GM10248 (cell line): ENCODE measurements at regions of chr17 and their contacts with region 1.

Region 1: GRCh38 chr17:64420143-64420971 is 28.6 kb upstream of the MILR1 start:
- DNase-seq: peak; percentile 66
- CTCF ChIP-seq: peak; percentile 80

Region 2: GRCh38 chr17:64306850-64307463 is 113.4 kb before region 1 on chr17:
- CTCF ChIA-PET with region 1: interaction called, 110 read pairs
- POLR2A ChIA-PET with region 1: no interaction called
- DNase-seq: peak; percentile 73
- CTCF ChIP-seq: peak; percentile 88

Region 3: DNA sequence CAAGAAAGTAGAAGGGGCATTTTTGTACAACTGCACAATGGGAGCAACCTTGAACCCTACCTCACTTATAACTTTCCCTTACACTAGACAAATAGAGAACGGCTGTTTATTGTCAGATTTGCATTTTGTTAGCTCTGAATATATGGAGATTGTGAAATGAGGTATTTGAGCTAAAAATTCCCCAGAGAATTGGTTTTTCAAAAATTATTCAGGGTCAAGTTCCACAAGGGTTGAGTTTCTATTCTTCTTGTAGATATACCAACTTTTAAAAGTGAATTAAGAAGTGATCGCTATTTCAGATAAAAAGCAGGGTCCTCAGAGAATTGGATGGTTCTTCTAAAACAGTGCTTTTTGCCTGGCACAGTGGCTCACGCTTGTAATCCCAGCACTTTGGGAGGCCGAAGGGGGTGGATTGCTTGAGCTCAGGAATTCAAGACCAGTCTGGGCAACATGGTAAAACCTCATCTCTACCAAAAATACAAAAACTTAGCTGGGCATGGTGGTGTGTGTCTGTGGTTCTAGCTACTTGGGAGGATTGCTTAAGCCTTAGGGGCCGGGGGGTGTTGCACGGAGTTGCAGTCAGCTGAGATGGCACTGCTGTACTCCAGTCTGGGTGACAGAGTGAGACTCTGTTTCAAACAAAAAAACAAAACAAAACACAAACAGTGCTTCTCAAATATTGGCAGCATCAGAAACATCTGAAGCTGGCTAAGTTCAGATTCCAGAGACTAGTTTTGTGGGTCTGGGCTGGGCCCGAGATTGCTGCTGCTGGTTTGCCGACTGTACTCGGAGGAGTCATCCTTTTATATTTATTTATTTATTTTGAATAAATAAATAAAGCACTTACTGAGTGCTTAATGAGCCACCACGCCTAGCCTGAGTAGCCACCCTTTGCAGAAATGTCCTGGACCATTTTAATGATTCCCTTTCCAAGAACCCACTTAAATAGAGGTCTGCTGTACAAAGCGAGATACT is 80.6 kb before region 1 on chr17:
- CTCF ChIA-PET with region 1: interaction called, 20 read pairs
- POLR2A ChIA-PET with region 1: no interaction called
- DNase-seq: no peak
- CTCF ChIP-seq: no peak

Region 4: GRCh38 chr17:64441772-64442540 is 21.6 kb after region 1 on chr17:
- CTCF ChIA-PET with region 1: interaction called, 29 read pairs
- POLR2A ChIA-PET with region 1: no interaction called
- DNase-seq: no peak
- CTCF ChIP-seq: no peak

Region 5: GRCh38 chr17:64466019-64466685 is 45.8 kb after region 1 on chr17:
- CTCF ChIA-PET with region 1: interaction called, 11 read pairs
- POLR2A ChIA-PET with region 1: interaction called, 8 read pairs
- DNase-seq: no peak
- CTCF ChIP-seq: no peak

Region 6: GRCh38 chr17:64496786-64497564 is 76.6 kb after region 1 on chr17 and contains the start of gene POLG2:
- CTCF ChIA-PET with region 1: interaction called, 96 read pairs
- POLR2A ChIA-PET with region 1: interaction called, 5 read pairs
- DNase-seq: peak; percentile 93
- CTCF ChIP-seq: peak; percentile 67

Region 7: DNA sequence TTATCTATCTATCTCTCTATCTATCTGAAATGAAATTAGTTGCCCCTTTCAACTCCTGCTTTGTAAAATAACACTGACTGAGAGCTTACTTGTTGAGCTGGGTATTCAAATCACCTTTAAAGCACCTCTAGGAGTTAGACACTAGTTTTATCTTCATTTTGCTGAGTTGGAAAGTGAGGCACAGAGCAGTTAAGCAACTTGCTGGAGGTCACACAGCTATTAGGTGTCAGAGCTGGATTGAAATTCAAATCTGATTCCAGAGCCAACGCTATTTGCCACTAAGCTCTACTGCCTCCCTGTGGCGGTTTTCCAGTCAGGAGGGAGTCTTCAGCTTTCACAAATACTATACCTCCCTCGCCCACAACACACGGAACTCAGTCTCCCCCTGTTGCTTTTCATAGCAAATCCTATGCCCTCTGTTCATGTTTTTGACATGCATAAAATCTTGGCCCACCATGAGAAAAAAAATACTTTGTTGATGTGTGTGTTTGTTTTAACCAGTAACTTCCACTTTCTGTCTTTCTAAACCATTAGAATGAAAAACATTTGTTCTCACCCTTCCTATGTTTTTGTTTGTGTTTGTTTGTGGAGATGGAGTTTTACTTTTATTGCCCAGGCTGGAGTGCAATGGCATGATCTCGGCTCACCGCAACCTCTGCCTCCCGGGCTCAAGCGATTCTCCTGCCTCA is 316.6 kb after region 1 on chr17:
- CTCF ChIA-PET with region 1: interaction called, 10 read pairs
- POLR2A ChIA-PET with region 1: no interaction called
- DNase-seq: no peak
- CTCF ChIP-seq: no peak